ENCODE measurements at regions of chr2 and their contacts with region 1.

Region 1: GRCh38 chr2:173965329-173966025 is at the start of gene SP3:
- DNase-seq: peak; percentile 97
- H3K4me3 ChIP-seq: peak within 1 kb of the TSS; percentile 100
- H3K27ac ChIP-seq: peak within 1 kb of the TSS; percentile 97
- H3K4me1 ChIP-seq: peaks cover 25% of the 10 kb centered on the region
- CTCF ChIP-seq: no peak
- total RNA-seq, gene SP3: 129 and 150 TPM in 2 replicates

Region 2: GRCh38 chr2:172629586-172629985 is 1335.9 kb before region 1 on chr2:
- CTCF ChIA-PET with region 1: no interaction called
- POLR2A ChIA-PET with region 1: no interaction called
- intact Hi-C with region 1: no loop called
- DNase-seq: no peak
- H3K4me3 ChIP-seq: no peak overlapping the region
- H3K27ac ChIP-seq: no peak overlapping the region
- H3K4me1 ChIP-seq: no peaks in the 10 kb centered on the region
- CTCF ChIP-seq: no peak

Region 3: DNA sequence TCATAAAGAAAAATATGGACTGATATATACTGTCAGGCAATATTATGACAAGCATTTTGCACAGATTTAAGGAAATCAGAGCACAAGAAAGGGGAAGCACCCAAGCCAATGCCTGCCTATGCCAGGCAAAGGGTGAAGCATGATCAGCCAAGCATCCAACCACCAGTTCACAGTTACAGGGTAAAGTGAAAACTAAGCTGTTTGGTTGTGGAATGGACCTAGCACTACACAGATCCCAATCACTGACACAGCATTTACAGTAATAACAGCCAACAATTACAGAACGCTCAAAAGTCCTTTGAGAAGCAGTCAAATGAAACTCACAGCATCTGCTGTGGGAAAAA is 90.6 kb before region 1 on chr2:
- CTCF ChIA-PET with region 1: no interaction called
- POLR2A ChIA-PET with region 1: interaction called, 4 read pairs
- intact Hi-C with region 1: loop called (anchors 1 kb)
- DNase-seq: peak; percentile 95
- H3K4me3 ChIP-seq: peak overlapping the region; percentile 58
- H3K27ac ChIP-seq: peak overlapping the region; percentile 99
- H3K4me1 ChIP-seq: peaks cover 78% of the 10 kb centered on the region
- CTCF ChIP-seq: no peak

Region 4: DNA sequence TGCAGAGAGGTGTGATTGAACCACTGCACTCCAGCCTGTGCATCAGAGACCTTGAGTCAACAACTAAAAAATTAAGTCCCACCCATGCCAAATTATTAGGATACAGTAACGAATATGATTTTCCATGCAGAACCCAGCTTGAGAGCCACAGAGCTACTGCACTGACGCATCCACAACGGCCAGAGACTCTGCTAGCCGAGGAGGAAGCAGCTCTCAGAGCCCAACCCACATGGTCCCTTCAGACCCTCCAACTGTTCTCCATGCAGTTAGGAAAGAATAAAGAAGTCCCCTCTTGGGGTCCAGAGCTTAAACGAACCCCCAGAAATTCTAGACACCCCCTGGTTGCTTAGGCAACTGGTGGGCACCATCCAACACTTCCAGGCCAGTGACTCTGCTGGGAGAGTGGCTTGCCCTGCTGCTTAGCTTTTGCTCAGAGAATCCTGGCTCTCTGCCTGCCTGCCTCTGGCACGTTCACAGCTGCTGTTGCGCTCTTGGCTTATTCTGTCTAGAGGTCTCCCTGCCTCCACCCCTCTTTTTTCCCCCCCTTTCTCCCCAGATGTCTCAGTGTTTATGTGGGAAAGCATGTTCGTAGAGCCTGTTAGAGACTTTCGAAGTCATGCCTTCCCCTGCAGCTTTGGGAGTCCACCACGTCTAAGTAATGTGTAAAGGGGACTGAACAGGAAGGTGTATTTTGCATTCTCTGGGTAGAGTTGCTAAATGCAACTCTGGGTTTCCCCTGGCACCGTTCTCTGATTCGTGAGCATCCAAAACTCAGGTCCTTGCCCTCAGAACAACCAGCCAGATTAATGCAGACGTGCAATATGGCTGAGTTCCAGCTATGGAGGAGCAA is 25.7 kb after region 1 on chr2:
- CTCF ChIA-PET with region 1: no interaction called
- POLR2A ChIA-PET with region 1: interaction called, 16 read pairs
- intact Hi-C with region 1: loop called (anchors 1 kb)
- DNase-seq: peak; percentile 60
- H3K4me3 ChIP-seq: peak overlapping the region; percentile 1
- H3K27ac ChIP-seq: peak overlapping the region; percentile 24
- H3K4me1 ChIP-seq: peaks cover 51% of the 10 kb centered on the region
- CTCF ChIP-seq: no peak

Region 5: GRCh38 chr2:174248187-174248997 is 282.9 kb after region 1 on chr2 and contains the start of gene OLA1:
- CTCF ChIA-PET with region 1: no interaction called
- POLR2A ChIA-PET with region 1: no interaction called
- intact Hi-C with region 1: loop called (anchors 10 kb)
- DNase-seq: peak; percentile 95
- H3K4me3 ChIP-seq: peak within 1 kb of the TSS; percentile 93
- H3K27ac ChIP-seq: peak within 1 kb of the TSS; percentile 47
- H3K4me1 ChIP-seq: peaks cover 17% of the 10 kb centered on the region
- CTCF ChIP-seq: no peak; the same call in 1 of the 2 replicates
- total RNA-seq, gene OLA1: 66.0 and 69.5 TPM in 2 replicates

Region 6: GRCh38 chr2:174593574-174594203 is 628.2 kb after region 1 on chr2:
- CTCF ChIA-PET with region 1: no interaction called
- POLR2A ChIA-PET with region 1: no interaction called
- intact Hi-C with region 1: loop called (anchors 5 kb)
- DNase-seq: peak; percentile 94
- H3K4me3 ChIP-seq: peak overlapping the region; percentile 79
- H3K27ac ChIP-seq: peak overlapping the region; percentile 94
- H3K4me1 ChIP-seq: peaks cover 65% of the 10 kb centered on the region
- CTCF ChIP-seq: no peak

Measured in OCI-LY7 (cell line).